CD4-positive, alpha-beta T cell (primary cell): ENCODE measurements at regions of chr22 and their contacts with region 1.

Region 1: GRCh38 chr22:25362215-25362882 is 142.9 kb downstream of the CRYBB2 start:
- DNase-seq: peak; percentile 44 to 77 (median 57)
- ATAC-seq: peak; percentile 49
- H3K4me3 ChIP-seq: no peak overlapping the region
- H3K4me3 Mint-ChIP-seq: no peak overlapping the region
- H3K27ac ChIP-seq: no peak overlapping the region
- H3K27ac Mint-ChIP-seq: no peak overlapping the region
- H3K4me1 ChIP-seq: peaks cover 9% of the 10 kb centered on the region
- H3K4me1 Mint-ChIP-seq: no peaks in the 10 kb centered on the region
- H3K27me3 ChIP-seq: no peaks in the 10 kb centered on the region
- H3K27me3 Mint-ChIP-seq: no peaks in the 10 kb centered on the region
- CTCF ChIP-seq: peak; percentile 96

Region 2: DNA sequence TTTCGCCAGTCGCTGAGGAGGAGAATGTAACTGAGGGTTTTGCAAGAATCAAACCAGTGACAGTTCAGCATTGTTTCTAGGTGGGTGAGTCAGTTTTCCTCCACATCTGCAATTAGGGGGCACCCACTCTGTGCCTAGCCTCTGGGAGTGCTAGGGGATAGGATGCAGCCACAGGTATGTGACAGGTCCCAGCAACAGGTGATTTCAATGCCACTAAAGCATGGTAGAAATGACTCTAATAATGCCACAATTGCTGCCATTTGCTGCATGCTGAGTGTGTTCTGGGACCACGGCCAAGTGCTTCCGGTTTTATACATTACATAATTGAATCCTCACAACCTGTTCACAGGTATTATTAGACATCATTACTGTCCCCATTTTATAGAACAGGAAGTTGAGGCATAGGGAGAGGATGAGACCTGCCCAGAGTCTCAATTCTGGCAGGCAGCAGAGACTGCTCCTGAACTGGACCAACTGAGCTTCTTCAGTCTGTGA is 142.4 kb before region 1 on chr22:
- CTCF ChIA-PET with region 1: no interaction called
- POLR2A ChIA-PET with region 1: no interaction called
- intact Hi-C with region 1: no loop called
- DNase-seq: no peak
- ATAC-seq: no peak
- H3K4me3 ChIP-seq: no peak overlapping the region
- H3K4me3 Mint-ChIP-seq: no peak overlapping the region
- H3K27ac ChIP-seq: no peak overlapping the region
- H3K27ac Mint-ChIP-seq: no peak overlapping the region
- H3K4me1 ChIP-seq: no peaks in the 10 kb centered on the region
- H3K4me1 Mint-ChIP-seq: no peaks in the 10 kb centered on the region
- H3K27me3 ChIP-seq: peaks cover 10 to 14% of the 10 kb centered on the region in 2 experiments
- H3K27me3 Mint-ChIP-seq: peaks cover 43% of the 10 kb centered on the region
- CTCF ChIP-seq: no peak

Region 3: GRCh38 chr22:25404928-25405816 is 42.8 kb after region 1 on chr22:
- CTCF ChIA-PET with region 1: no interaction called
- POLR2A ChIA-PET with region 1: no interaction called
- intact Hi-C with region 1: no loop called
- DNase-seq: peak; percentile 22 to 83 (median 58)
- ATAC-seq: peak; percentile 90
- H3K4me3 ChIP-seq: peak overlapping the region; percentile 59
- H3K4me3 Mint-ChIP-seq: peak overlapping the region; percentile 87
- H3K27ac ChIP-seq: peak overlapping the region in 1 of 2 donors; percentile 60
- H3K27ac Mint-ChIP-seq: peak overlapping the region; percentile 64
- H3K4me1 ChIP-seq: peaks cover 42% of the 10 kb centered on the region
- H3K4me1 Mint-ChIP-seq: peaks cover 33% of the 10 kb centered on the region
- H3K27me3 ChIP-seq: no peaks in the 10 kb centered on the region
- H3K27me3 Mint-ChIP-seq: no peaks in the 10 kb centered on the region
- CTCF ChIP-seq: no peak

Region 4: DNA sequence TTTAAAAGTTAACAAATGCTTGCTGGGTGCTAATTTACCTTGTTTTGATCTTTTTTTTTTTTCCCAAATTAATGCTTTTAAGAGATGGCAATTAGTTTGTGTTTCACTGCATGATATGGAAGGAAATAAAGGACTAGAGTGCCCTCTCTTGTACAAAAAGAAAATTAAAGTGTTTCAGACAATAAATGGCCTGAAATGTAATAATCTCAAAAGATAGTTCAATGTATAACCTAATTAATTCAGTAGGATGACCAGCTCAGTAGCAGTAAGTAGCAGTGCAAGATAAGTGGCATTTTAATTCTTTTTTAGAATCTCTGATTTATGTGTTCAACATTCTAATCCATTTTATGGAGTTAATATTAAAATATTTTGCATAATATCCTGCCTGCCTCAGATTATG is 339.7 kb after region 1 on chr22:
- CTCF ChIA-PET with region 1: no interaction called
- POLR2A ChIA-PET with region 1: no interaction called
- intact Hi-C with region 1: loop called in 1 of 2 experiments (anchors 10 kb)
- DNase-seq: peak in 2 of 14 experiments; percentile 10 to 14
- ATAC-seq: no peak
- H3K4me3 ChIP-seq: no peak overlapping the region
- H3K4me3 Mint-ChIP-seq: no peak overlapping the region
- H3K27ac ChIP-seq: no peak overlapping the region
- H3K27ac Mint-ChIP-seq: no peak overlapping the region
- H3K4me1 ChIP-seq: no peaks in the 10 kb centered on the region
- H3K4me1 Mint-ChIP-seq: no peaks in the 10 kb centered on the region
- H3K27me3 ChIP-seq: no peaks in the 10 kb centered on the region
- H3K27me3 Mint-ChIP-seq: no peaks in the 10 kb centered on the region
- CTCF ChIP-seq: no peak

Region 5: GRCh38 chr22:25777870-25778269 is 415.5 kb after region 1 on chr22:
- CTCF ChIA-PET with region 1: no interaction called
- POLR2A ChIA-PET with region 1: no interaction called
- intact Hi-C with region 1: loop called in 1 of 2 experiments (anchors 10 kb)
- DNase-seq: no peak
- ATAC-seq: no peak
- H3K4me3 ChIP-seq: no peak overlapping the region
- H3K4me3 Mint-ChIP-seq: no peak overlapping the region
- H3K27ac ChIP-seq: no peak overlapping the region
- H3K27ac Mint-ChIP-seq: no peak overlapping the region
- H3K4me1 ChIP-seq: peaks cover 3% of the 10 kb centered on the region
- H3K4me1 Mint-ChIP-seq: peaks cover 1% of the 10 kb centered on the region
- H3K27me3 ChIP-seq: no peaks in the 10 kb centered on the region
- H3K27me3 Mint-ChIP-seq: peaks cover 4% of the 10 kb centered on the region
- CTCF ChIP-seq: no peak